B cell (primary cell): ENCODE measurements at regions of chr13 and their contacts with region 1.

Region 1: GRCh38 chr13:42110410-42111155 is 62.1 kb downstream of the DGKH start:
- DNase-seq: peak; percentile 76
- ATAC-seq: peak; percentile 57
- H3K4me3 ChIP-seq: no peak overlapping the region
- H3K4me3 Mint-ChIP-seq: no peak overlapping the region
- H3K27ac ChIP-seq: no peak overlapping the region
- H3K27ac Mint-ChIP-seq: no peak overlapping the region
- H3K4me1 ChIP-seq: no peaks in the 10 kb centered on the region
- H3K4me1 Mint-ChIP-seq: no peaks in the 10 kb centered on the region
- H3K27me3 ChIP-seq: peaks cover 0 to 3% (median 0%) of the 10 kb centered on the region in 4 experiments
- H3K27me3 Mint-ChIP-seq: peaks cover 8% of the 10 kb centered on the region
- CTCF ChIP-seq: peak; percentile 93

Region 2: GRCh38 chr13:41352935-41353840 is 757.4 kb before region 1 on chr13:
- CTCF ChIA-PET with region 1: interaction called, 8 read pairs
- POLR2A ChIA-PET with region 1: no interaction called
- intact Hi-C with region 1: loop called (anchors 1 kb)
- DNase-seq: peak; percentile 69
- ATAC-seq: peak; percentile 53
- H3K4me3 ChIP-seq: no peak overlapping the region
- H3K4me3 Mint-ChIP-seq: no peak overlapping the region
- H3K27ac ChIP-seq: no peak overlapping the region
- H3K27ac Mint-ChIP-seq: no peak overlapping the region
- H3K4me1 ChIP-seq: no peaks in the 10 kb centered on the region
- H3K4me1 Mint-ChIP-seq: peaks cover 4% of the 10 kb centered on the region
- H3K27me3 ChIP-seq: no peaks in the 10 kb centered on the region
- H3K27me3 Mint-ChIP-seq: no peaks in the 10 kb centered on the region
- CTCF ChIP-seq: peak; percentile 94

Region 3: DNA sequence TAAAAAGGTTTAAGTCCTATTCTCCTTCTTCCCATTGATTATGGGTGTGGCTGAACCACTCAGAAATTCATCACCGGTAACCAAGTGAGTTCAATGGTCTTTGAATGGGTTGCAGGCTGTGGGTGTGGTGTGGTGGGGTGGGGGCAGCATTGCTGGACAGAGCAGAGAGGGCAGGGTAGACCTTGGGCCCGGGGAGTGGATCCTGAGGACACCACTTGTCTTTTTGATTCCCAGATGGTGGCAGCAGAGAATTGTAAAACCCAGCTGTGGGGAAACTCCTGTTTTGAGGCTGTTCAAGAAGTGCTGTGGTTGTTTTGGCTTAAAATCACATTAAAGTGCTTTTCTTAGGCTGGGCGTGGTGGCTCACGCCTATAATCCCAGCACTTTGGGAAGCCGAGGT is 699.1 kb before region 1 on chr13:
- CTCF ChIA-PET with region 1: interaction called, 11 read pairs
- POLR2A ChIA-PET with region 1: no interaction called
- intact Hi-C with region 1: no loop called
- DNase-seq: peak; percentile 29
- ATAC-seq: no peak
- H3K4me3 ChIP-seq: no peak overlapping the region
- H3K4me3 Mint-ChIP-seq: no peak overlapping the region
- H3K27ac ChIP-seq: no peak overlapping the region
- H3K27ac Mint-ChIP-seq: no peak overlapping the region
- H3K4me1 ChIP-seq: no peaks in the 10 kb centered on the region
- H3K4me1 Mint-ChIP-seq: no peaks in the 10 kb centered on the region
- H3K27me3 ChIP-seq: no peaks in the 10 kb centered on the region
- H3K27me3 Mint-ChIP-seq: peaks cover 23% of the 10 kb centered on the region
- CTCF ChIP-seq: no peak

Region 4: GRCh38 chr13:41668130-41668757 is 442.3 kb before region 1 on chr13:
- CTCF ChIA-PET with region 1: interaction called, 156 read pairs
- POLR2A ChIA-PET with region 1: no interaction called
- intact Hi-C with region 1: no loop called
- DNase-seq: peak; percentile 62
- ATAC-seq: peak; percentile 51
- H3K4me3 ChIP-seq: no peak overlapping the region
- H3K4me3 Mint-ChIP-seq: no peak overlapping the region
- H3K27ac ChIP-seq: no peak overlapping the region
- H3K27ac Mint-ChIP-seq: no peak overlapping the region
- H3K4me1 ChIP-seq: no peaks in the 10 kb centered on the region
- H3K4me1 Mint-ChIP-seq: no peaks in the 10 kb centered on the region
- H3K27me3 ChIP-seq: peaks cover 0 to 28% (median 7%) of the 10 kb centered on the region in 4 experiments
- H3K27me3 Mint-ChIP-seq: peaks cover 21% of the 10 kb centered on the region
- CTCF ChIP-seq: peak; percentile 76

Region 5: DNA sequence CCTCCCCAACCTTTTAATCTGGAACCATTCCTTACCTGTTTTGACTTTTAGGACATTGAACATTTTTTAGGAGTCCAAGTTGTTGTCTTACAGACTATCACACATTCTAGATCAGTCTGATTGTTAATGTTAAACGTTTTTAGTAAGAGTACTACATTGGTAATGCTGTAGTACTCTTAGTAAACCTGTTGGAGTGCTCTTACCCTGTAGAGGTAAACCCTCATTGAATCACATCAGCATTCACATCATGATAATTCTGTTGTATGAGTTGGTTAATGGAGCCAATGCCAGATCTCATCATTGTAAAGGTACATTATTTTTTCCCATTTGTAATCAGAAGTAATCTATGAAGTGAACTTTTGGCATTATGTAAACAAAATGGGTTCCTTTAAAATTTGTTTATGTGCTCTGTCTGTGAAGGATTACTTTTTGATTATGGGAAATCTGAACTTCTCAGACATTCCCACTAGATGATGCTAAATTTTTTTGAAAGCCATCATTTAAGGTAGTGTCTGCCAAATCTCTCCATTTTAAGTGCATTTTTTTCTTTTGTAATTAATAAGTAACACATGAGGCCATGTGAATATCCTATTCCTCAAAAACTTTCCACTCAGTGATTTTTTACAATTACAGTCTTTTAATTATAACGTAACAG is 204.9 kb before region 1 on chr13:
- CTCF ChIA-PET with region 1: interaction called, 14 read pairs
- POLR2A ChIA-PET with region 1: no interaction called
- intact Hi-C with region 1: loop called (anchors 1 kb)
- DNase-seq: peak; percentile 24
- ATAC-seq: peak; percentile 51
- H3K4me3 ChIP-seq: no peak overlapping the region
- H3K4me3 Mint-ChIP-seq: no peak overlapping the region
- H3K27ac ChIP-seq: no peak overlapping the region
- H3K27ac Mint-ChIP-seq: no peak overlapping the region
- H3K4me1 ChIP-seq: no peaks in the 10 kb centered on the region
- H3K4me1 Mint-ChIP-seq: no peaks in the 10 kb centered on the region
- H3K27me3 ChIP-seq: no peaks in the 10 kb centered on the region
- H3K27me3 Mint-ChIP-seq: no peaks in the 10 kb centered on the region
- CTCF ChIP-seq: peak; percentile 64

Region 6: DNA sequence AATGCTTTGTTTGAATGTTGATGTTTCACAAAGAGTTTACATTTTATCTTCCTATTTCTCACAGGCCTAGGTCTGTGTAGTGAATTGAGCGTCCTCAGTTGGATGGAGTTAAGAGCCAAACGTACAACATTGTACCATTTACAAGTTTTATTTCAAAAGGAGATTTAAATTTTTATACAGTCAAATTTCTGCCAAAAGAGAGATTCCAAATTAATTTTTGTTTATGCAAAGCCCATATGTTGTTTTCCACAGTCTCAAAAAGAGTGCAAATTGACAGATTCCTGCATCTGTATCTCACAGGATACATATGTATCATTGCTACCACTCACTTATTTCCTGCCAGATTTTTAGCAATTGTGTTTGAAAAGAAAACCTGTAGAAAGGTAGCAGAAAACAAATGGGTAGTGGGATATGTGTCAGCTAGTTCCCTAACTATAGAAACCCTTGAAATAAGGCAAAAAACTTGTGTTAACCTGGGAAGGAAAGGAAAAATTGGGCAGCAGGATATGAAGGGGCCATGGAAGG is 16.0 kb before region 1 on chr13:
- CTCF ChIA-PET with region 1: no interaction called
- POLR2A ChIA-PET with region 1: no interaction called
- intact Hi-C with region 1: no loop called
- DNase-seq: no peak
- ATAC-seq: no peak
- H3K4me3 ChIP-seq: no peak overlapping the region
- H3K4me3 Mint-ChIP-seq: no peak overlapping the region
- H3K27ac ChIP-seq: no peak overlapping the region
- H3K27ac Mint-ChIP-seq: no peak overlapping the region
- H3K4me1 ChIP-seq: no peaks in the 10 kb centered on the region
- H3K4me1 Mint-ChIP-seq: no peaks in the 10 kb centered on the region
- H3K27me3 ChIP-seq: no peaks in the 10 kb centered on the region
- H3K27me3 Mint-ChIP-seq: no peaks in the 10 kb centered on the region
- CTCF ChIP-seq: no peak